ENCODE measurements at regions of chr6 and their contacts with region 1.

Region 1: DNA sequence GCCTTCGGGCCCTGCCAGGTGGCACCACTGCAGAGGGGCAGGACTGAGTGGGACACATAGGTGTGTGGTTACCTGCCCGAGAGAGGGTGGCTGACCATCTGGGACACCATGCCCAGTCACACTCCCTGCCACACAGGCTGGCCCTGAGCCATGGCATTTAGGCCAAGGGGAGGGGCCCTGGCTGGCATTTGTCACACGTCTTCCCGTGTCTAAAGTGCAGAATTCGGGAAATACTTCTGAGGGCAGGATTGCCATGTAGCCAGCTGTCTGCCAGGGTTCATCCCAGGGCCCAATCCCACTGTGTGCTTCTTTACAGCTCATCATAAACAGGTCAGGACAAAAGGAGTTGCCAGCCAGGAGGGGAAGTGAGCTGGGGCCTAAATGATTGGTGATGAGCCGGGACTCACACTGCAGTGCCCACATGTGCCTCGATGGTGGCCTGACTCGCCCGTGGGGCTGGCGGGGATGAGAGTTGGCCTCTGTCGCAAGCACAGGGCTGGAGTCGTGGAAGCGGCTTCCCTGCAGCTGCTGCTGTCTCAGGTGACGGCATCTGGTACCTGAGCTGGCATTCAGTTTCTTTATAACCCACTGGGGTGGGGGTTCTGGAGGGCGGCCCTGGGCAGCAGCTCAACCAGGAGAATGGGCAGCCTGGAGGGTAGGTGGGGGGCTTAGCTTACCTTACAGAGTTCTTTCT is 5.9 kb upstream of the UNC93A start:
- DNase-seq: no peak
- ATAC-seq: no peak
- H3K4me3 ChIP-seq: no peak overlapping the region
- H3K27ac ChIP-seq: no peak overlapping the region
- H3K4me1 ChIP-seq: peaks cover 92% of the 10 kb centered on the region
- H3K27me3 ChIP-seq: no peaks in the 10 kb centered on the region
- CTCF ChIP-seq: no peak
- EP300 ChIP-seq: no peak
- POLR2A ChIP-seq: no peak
- RAD21 ChIP-seq: no peak

Region 2: DNA sequence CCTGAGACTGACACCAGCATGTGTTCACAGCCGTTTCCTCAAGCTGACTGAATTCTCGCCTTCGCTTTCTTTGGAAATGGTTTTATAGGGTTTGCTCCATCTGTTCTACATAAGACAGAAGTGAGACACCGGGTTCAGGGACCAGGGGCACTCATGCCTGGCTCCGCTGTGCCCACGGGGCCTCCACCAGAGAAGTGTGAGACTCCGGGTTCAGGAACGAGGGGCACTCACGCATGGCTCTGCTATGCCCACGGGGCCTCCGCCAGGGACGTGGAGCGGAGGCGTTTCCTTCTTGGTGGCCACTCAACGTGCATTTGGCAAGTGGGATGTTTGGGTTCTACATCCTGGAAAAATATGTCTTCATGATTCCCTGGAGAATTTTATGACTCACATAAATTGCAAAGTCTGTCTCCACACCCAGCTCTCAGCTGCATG is 435.5 kb before region 1 on chr6:
- CTCF ChIA-PET with region 1: no interaction called
- POLR2A ChIA-PET with region 1: no interaction called
- in situ Hi-C with region 1: no loop called
- intact Hi-C with region 1: no loop called
- DNase-seq: no peak
- ATAC-seq: no peak
- H3K4me3 ChIP-seq: no peak overlapping the region
- H3K27ac ChIP-seq: no peak overlapping the region
- H3K4me1 ChIP-seq: no peaks in the 10 kb centered on the region
- H3K27me3 ChIP-seq: no peaks in the 10 kb centered on the region
- CTCF ChIP-seq: no peak
- EP300 ChIP-seq: no peak
- POLR2A ChIP-seq: no peak
- RAD21 ChIP-seq: no peak

Region 3: DNA sequence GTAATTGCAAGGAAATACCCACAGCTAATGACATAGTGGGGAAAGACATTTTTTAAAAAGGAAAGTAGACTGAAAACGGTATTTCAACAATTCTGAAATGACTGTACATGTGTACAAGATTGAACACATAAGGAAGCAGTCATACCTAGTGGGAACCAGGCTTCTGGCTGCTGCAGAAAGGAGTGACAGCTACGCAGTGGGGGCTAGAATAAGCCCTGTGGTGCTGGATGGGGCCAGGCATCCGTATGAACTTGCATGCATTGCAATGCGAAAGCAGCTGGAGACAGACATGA is 72.6 kb before region 1 on chr6:
- CTCF ChIA-PET with region 1: interaction called, 19 read pairs
- POLR2A ChIA-PET with region 1: interaction called, 22 read pairs
- in situ Hi-C with region 1: no loop called
- intact Hi-C with region 1: no loop called
- DNase-seq: no peak
- ATAC-seq: no peak
- H3K4me3 ChIP-seq: no peak overlapping the region
- H3K27ac ChIP-seq: no peak overlapping the region
- H3K4me1 ChIP-seq: peaks cover 81% of the 10 kb centered on the region
- H3K27me3 ChIP-seq: no peaks in the 10 kb centered on the region
- CTCF ChIP-seq: no peak
- EP300 ChIP-seq: no peak
- POLR2A ChIP-seq: no peak
- RAD21 ChIP-seq: no peak

Region 4: GRCh38 chr6:167341665-167342655 is 56.7 kb after region 1 on chr6:
- CTCF ChIA-PET with region 1: no interaction called
- POLR2A ChIA-PET with region 1: interaction called, 57 read pairs
- in situ Hi-C with region 1: no loop called
- intact Hi-C with region 1: loop called (anchors 1 kb)
- DNase-seq: peak; percentile 100
- ATAC-seq: peak; percentile 91
- H3K4me3 ChIP-seq: peak overlapping the region in 1 of 3 experiments; percentile 14; a peak in 1 of 6 replicates
- H3K27ac ChIP-seq: peak overlapping the region; percentile 79
- H3K4me1 ChIP-seq: peaks cover 81% of the 10 kb centered on the region
- H3K27me3 ChIP-seq: no peaks in the 10 kb centered on the region
- CTCF ChIP-seq: 0 out of 2 replicates have a peak, but pooled peaks have one; percentile 20
- EP300 ChIP-seq: peak; percentile 99 to 100
- POLR2A ChIP-seq: 0 out of 4 replicates have a peak, but pooled peaks of 1 of the 2 experiments have one; percentile 24
- RAD21 ChIP-seq: peak; percentile 15; the same call in 1 of the 2 replicates

Region 5: DNA sequence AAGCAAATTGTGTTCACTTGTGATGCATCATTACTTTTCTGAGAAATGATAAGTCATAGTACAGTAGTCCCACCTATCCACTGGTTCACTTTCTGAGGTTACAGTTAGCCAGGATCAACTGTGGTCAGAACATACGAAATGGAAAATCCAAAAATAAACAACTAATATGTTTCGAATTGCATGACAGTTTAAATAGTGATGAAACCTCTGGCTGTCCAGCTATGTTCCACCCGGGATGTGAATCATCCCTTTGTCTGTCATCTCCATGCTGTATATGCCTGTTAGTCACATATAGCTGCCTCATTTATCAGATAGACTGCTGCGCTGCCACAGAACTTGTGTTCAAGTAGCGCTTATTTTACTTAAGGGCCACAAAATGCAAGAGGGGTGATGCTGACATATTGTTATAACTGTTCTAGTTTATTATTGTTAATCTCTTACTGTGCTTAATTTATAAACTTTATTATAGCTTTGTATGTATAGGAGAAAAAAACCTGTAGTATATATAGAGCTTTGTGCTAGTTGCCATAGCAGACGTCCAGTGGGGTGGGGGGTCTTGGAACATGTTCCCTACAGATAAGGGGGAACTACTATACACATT is 570.7 kb after region 1 on chr6:
- CTCF ChIA-PET with region 1: no interaction called
- POLR2A ChIA-PET with region 1: no interaction called
- in situ Hi-C with region 1: no loop called
- intact Hi-C with region 1: no loop called
- DNase-seq: peak; percentile 96
- ATAC-seq: peak; percentile 97
- H3K4me3 ChIP-seq: no peak overlapping the region
- H3K27ac ChIP-seq: peak overlapping the region; percentile 75
- H3K4me1 ChIP-seq: peaks cover 96% of the 10 kb centered on the region
- H3K27me3 ChIP-seq: no peaks in the 10 kb centered on the region
- CTCF ChIP-seq: no peak
- EP300 ChIP-seq: peak; percentile 76 to 79; a peak in 3 of 4 replicates
- POLR2A ChIP-seq: no peak
- RAD21 ChIP-seq: no peak